Lower lobe of right lung (tissue), 2 donors: ENCODE measurements at regions of chr2 and their contacts with region 1.

Region 1: GRCh38 chr2:50401772-50402653 is 629.9 kb downstream of the NRXN1 start:
- DNase-seq: no peak
- ATAC-seq: peak; percentile 39 to 57
- H3K4me3 ChIP-seq: no peak overlapping the region
- H3K27ac ChIP-seq: no peak overlapping the region
- H3K4me1 ChIP-seq: no peaks in the 10 kb centered on the region
- H3K27me3 ChIP-seq: no peaks in the 10 kb centered on the region
- CTCF ChIP-seq: peak; percentile 75

Region 2: GRCh38 chr2:48946449-48947048 is 1455.5 kb before region 1 on chr2:
- intact Hi-C with region 1: loop called (anchors 10 kb)
- DNase-seq: no peak
- ATAC-seq: peak; percentile 90
- H3K4me3 ChIP-seq: no peak overlapping the region
- H3K27ac ChIP-seq: no peak overlapping the region
- H3K4me1 ChIP-seq: no peaks in the 10 kb centered on the region
- H3K27me3 ChIP-seq: no peaks in the 10 kb centered on the region
- CTCF ChIP-seq: peak; percentile 91

Region 3: GRCh38 chr2:50466685-50467084 is 64.7 kb after region 1 on chr2:
- intact Hi-C with region 1: no loop called
- DNase-seq: no peak
- ATAC-seq: no peak
- H3K4me3 ChIP-seq: no peak overlapping the region
- H3K27ac ChIP-seq: no peak overlapping the region
- H3K4me1 ChIP-seq: no peaks in the 10 kb centered on the region
- H3K27me3 ChIP-seq: no peaks in the 10 kb centered on the region
- CTCF ChIP-seq: no peak